Transverse colon (tissue), 4 donors: ENCODE measurements at regions of chr6 and their contacts with region 1.

Region 1: DNA sequence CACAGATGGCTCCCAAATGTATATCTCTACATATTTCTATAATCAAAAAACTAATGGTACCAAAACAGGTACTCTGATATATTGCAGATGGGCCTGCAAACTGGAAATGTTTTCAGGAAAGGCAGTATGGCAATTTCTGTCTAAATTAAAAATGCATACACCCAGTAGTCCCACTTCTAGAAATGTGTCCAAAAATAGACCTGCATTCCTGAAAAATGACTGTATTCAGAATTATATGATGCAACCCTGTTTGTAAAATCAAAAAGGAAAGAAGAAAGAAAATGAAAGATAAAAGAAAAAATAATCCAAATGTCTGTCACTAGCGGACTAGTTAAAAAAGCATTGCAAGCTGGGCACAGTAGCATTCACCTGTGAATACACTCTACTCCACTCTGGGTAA is 12.9 kb upstream of the MICB start:
- DNase-seq: no peak
- H3K4me3 ChIP-seq: no peak overlapping the region
- H3K27ac ChIP-seq: no peak overlapping the region
- H3K4me1 ChIP-seq: peaks cover 0 to under 1% (median 0%) of the 10 kb centered on the region in 4 donors
- H3K27me3 ChIP-seq: no peaks in the 10 kb centered on the region
- CTCF ChIP-seq: no peak
- EP300 ChIP-seq: no peak
- POLR2A ChIP-seq: no peak

Region 2: DNA sequence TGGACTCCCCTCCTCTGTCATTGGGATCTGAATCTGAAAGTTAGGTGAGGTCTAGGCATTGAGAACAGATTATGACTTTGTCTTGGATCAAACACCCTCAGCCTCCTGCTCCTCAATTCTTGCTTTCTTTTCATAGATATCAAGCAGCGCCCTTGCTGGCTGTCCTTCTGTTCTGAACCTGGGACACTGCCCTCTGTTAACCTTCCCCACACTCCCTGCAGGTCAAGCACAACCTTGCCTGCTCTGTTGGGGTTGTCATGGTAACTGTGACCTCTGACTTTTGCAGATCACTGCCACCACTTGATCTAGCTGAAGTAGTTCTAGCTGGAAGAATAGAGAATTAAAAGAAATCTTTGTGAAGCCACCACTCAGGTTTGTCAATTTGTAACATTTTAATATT is 98.1 kb before region 1 on chr6:
- in situ Hi-C with region 1: loop called in 2 of 4 experiments (anchors 5 kb)
- intact Hi-C with region 1: no loop called
- DNase-seq: no peak
- H3K4me3 ChIP-seq: no peak overlapping the region
- H3K27ac ChIP-seq: no peak overlapping the region
- H3K4me1 ChIP-seq: no peaks in the 10 kb centered on the region
- H3K27me3 ChIP-seq: no peaks in the 10 kb centered on the region
- CTCF ChIP-seq: no peak
- EP300 ChIP-seq: no peak
- POLR2A ChIP-seq: no peak

Region 3: GRCh38 chr6:31609519-31610406 is 124.7 kb after region 1 on chr6:
- in situ Hi-C with region 1: no loop called
- intact Hi-C with region 1: no loop called
- DNase-seq: no peak
- H3K4me3 ChIP-seq: no peak overlapping the region
- H3K27ac ChIP-seq: no peak overlapping the region
- H3K4me1 ChIP-seq: peaks cover 0 to 12% (median 4%) of the 10 kb centered on the region in 4 donors
- H3K27me3 ChIP-seq: no peaks in the 10 kb centered on the region
- CTCF ChIP-seq: no peak
- EP300 ChIP-seq: no peak
- POLR2A ChIP-seq: no peak

Region 4: GRCh38 chr6:32940656-32941213 is 1455.7 kb after region 1 on chr6 and contains the start of gene HLA-DMB:
- in situ Hi-C with region 1: no loop called
- intact Hi-C with region 1: no loop called
- DNase-seq: peak; percentile 61
- H3K4me3 ChIP-seq: peak within 1 kb of the TSS; percentile 7 to 49 (median 13)
- H3K27ac ChIP-seq: peak within 1 kb of the TSS; percentile 68 to 74 (median 68)
- H3K4me1 ChIP-seq: peaks cover 3 to 35% (median 7%) of the 10 kb centered on the region in 4 donors
- H3K27me3 ChIP-seq: no peaks in the 10 kb centered on the region
- CTCF ChIP-seq: no peak
- EP300 ChIP-seq: no peak
- POLR2A ChIP-seq: peak; percentile 38
- total RNA-seq, gene HLA-DMB: 1.8 to 20.8 (median 13.2) TPM